Lower leg skin (tissue), 4 donors: ENCODE measurements at regions of chr1 and their contacts with region 1.

Region 1: DNA sequence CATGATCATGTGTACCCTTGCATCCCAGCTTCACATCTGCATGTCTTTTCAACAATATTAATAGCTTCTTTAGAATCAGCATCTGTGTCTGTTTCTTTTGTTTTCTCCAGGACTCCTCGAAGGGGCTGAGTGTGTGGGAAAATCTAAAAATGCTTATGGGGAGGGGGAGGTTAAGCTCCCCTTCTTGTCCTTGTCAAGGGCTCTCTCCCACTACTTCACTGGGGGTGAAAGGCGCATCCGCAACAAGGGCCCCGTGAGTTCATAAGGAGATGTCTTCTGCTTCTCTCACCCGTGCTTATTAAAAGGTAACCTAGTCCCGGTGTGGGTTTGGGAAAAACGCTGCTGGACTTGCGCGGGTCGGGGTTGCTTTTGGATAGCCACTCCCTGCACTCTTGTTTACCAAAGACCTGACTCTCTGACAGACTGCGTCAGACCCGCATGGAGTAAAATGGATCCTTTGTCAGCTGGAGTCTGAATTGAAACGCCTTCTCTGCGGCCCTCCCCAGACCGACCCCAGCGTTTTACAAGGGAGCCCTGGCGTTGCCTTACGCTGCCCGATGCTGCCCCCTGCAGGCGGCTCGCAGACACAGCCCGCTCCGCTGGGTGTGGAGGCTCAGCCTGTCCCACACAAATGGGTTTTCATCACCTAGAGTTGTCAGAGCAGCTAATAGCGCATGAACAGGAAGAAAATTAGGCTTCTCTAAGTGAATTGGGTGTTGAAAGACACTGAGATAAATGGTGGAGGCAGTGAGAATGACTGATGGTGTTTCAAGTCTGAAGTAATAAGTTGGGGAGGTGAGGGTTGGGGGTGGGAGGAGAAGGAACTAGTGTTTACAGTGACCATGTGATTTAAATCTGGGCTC is 53.8 kb downstream of the IER5 start:
- DNase-seq: peak; percentile 79 to 97
- H3K4me3 ChIP-seq: no peak overlapping the region
- CTCF ChIP-seq: peak in 2 of 3 donors; percentile 85 to 96
- POLR2A ChIP-seq: no peak

Region 2: DNA sequence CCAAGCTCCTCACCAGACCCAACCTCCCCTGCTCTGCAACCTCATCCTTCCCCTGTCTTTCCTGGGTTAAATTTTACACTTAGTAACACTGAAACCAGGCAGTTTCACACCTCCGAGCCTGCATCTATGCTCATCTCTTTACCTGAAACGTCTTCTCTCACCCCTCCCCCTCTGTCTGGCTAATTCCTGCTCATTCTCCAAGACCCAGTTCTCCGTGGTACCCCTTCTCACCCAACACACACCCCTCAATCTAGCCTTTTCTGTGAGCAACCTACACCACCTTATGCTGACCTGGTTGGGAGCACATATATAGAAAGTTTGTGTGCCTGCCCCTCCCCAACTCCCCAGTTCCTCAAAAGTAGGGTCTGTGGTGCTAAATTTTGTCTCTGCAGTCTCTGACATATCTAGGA is 233.3 kb before region 1 on chr1:
- intact Hi-C with region 1: loop called (anchors 10 kb)
- DNase-seq: peak in 1 of 2 donors; percentile 31
- H3K4me3 ChIP-seq: no peak overlapping the region
- CTCF ChIP-seq: no peak
- POLR2A ChIP-seq: no peak

Region 3: GRCh38 chr1:181033799-181034451 is 108.4 kb before region 1 on chr1 and contains the start of gene MR1:
- intact Hi-C with region 1: loop called (anchors 10 kb)
- DNase-seq: peak in 1 of 2 donors; percentile 49
- H3K4me3 ChIP-seq: no peak within 1 kb of the TSS
- CTCF ChIP-seq: no peak
- POLR2A ChIP-seq: no peak
- total RNA-seq, gene MR1: 13.2 to 18.6 (median 16.3) TPM

Region 4: DNA sequence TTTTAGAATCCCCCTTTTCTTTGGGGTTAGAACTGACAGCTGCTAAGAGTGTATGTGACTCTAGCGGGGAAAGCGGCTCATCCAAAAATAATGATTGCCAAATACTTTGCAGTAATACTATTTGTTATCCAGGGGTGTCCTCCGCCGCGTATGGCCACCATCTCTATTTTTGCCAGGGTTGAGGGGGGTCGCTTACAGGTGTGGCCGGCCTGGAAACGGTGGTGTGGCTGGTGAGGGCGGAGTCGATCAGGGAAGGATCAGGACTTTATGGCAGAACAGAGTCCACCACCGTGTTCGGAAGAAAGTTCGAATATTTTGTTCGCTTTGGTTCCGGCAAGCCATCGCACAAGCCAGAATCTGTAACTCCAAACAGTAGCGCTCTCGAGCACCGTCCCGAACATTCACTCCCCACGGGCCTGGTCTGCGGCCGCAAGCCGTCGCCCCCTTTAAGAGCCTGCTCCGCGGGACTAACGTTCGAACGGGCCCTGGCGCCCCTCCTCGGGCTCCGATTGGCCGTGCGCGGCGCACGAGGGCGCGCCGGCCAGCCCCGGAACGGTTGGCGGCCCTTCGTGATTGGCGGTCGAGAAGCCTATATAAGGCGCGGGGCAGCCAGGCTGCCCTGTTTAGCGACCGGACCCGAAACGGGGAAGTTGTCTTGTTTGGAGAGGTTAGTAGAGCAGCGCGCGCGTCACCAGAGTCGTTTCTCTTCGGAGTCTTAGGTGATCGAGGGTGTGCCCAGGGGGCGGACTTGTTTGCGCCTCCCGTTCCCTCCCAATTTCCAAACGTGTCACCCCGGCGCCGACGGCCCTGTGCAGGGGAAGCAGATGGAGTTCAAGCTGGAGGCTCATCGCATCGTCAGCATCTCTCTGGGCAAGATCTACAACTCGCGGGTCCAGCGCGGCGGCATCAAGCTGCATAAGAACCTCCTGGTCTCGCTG is 54.0 kb before region 1 on chr1 and contains the start of gene IER5:
- intact Hi-C with region 1: loop called (anchors 5 kb)
- DNase-seq: peak; percentile 97 to 100
- H3K4me3 ChIP-seq: peak within 1 kb of the TSS; percentile 85
- CTCF ChIP-seq: no peak
- POLR2A ChIP-seq: peak in 1 of 2 donors; percentile 97
- total RNA-seq, gene IER5: 36.7 to 53.4 (median 48.3) TPM

Region 5: DNA sequence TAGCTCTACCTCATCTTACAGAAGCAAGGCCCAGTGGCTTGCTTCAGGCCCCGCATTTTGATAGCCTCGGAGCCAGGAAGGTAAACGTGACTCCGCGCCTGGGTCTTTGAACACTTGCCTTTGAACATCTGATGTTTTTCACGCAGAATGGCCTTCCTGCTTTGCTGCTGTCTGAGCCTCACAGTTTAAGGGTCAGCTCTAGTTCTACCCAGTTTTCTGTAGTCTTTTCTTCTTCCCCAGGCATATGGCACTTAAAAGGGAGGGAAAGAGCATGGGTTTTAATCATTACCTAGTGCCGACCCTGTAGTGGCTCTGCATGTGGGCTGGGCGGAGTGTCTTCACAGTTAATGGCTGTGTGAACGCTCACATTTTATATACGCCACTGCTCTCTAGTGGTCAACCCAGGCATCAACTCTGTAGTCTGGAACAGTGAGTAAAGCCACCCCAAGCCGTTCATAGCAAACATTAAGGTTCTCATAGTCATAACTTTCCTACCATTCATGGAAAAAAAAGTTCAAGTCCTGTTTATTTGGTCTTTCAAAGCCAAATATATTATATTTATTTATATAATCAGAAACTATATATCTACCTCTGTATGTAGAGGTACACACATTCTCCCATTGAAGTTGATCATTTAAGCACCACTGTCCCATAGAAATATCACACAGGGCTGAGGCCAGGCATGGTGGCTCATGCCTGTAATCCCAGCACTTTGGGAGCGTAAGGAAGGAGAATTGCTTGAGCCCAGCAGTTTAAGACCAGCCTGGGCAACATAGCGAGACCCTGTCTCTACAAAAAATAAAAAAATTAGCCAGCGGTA is 24.3 kb after region 1 on chr1:
- intact Hi-C with region 1: loop called (anchors 1 kb)
- DNase-seq: peak in 1 of 2 donors; percentile 65
- H3K4me3 ChIP-seq: no peak overlapping the region
- CTCF ChIP-seq: peak in 1 of 3 donors; percentile 57
- POLR2A ChIP-seq: no peak